ENCODE measurements at regions of chr4 and their contacts with region 1.

Region 1: DNA sequence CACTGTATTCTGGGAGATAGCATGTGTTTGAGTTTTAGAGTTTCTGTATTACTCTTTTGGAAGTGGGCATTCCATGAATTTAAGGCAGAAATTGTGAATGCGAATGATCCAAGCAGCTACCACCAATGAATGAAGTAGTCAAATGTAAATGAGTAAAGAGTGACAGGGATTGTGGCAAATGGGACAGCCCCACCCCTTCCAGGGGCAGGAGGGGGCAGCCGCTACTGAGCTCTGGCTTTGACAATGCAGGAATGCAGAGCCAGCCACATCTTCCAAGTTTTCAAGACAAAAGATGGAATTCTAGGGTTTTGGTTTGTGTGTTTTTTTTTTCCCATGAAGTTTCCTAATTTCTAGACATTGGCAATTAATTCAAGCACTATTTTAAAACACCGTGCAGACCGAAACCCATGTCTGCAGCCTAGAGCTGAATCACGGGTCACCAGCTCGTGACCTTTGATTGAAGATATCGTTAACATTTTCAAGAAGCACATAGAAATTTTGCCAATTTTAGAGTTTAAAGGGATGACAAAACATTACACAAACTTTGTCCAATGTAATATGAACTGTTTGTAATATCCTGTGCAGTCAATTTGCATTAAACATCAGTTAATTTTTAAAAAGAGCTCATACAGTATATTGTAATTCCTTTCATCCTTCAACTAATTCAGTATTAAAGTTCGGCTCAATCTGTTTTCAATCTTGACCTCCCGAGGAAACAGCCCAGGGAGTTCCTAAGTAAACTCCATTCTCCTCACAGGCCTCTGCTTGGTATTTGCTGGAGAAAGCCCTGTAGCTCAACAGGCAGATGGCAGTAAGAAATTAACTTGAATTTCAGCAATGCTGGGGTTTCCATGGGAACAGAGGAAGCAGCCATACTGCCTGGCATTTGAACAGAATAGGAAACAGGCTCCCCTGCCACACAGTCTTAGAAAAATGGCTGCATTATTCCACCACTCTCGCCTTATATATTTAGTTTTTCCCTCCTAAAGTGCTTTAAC is 83.4 kb downstream of the UCHL1 start:
- DNase-seq: peak in 6 of 10 donors; percentile 41 to 63 (median 52)
- H3K4me3 ChIP-seq: peak overlapping the region in 4 of 59 donors; percentile 4 to 29 (median 20)
- H3K27ac ChIP-seq: peak overlapping the region in 21 of 59 donors; percentile 1 to 68 (median 37)
- H3K27me3 ChIP-seq: no peaks in the 10 kb centered on the region
- CTCF ChIP-seq: peak; percentile 18 to 91 (median 73)

Region 2: DNA sequence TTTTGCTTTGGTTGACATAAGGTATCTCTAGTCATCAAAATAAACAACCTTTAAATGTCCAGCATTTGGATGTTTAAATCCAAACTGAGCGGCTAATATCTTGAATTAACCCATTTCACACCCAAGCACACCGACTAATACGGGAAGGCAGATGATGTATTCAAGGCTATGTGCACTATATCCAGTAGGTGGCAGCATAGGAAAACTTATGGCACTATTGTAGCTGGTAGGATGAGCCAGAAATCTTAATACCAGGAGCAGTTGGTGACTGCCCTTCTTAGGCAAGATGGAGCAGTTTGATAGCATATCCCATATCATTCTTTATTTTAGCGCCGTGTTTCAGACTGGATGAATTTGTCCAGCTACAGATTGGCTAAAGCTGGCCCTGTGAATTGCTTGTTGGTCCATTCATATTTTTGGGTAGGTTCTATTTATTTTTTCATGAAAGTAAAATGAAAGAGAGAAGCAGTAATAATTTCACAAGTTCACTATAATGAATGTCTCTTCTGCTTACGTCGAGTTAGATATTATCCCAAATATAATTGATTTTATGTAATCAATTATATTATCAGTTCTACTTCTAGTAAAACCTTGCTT is 59.0 kb before region 1 on chr4:
- intact Hi-C with region 1: loop called (anchors 5 to 10 kb)
- DNase-seq: peak in 2 of 10 donors; percentile 47 to 54
- H3K4me3 ChIP-seq: peak overlapping the region in 1 of 59 donors; percentile 20
- H3K27ac ChIP-seq: no peak overlapping the region
- H3K27me3 ChIP-seq: no peaks in the 10 kb centered on the region
- CTCF ChIP-seq: peak; percentile 81 to 99 (median 93)

Region 3: DNA sequence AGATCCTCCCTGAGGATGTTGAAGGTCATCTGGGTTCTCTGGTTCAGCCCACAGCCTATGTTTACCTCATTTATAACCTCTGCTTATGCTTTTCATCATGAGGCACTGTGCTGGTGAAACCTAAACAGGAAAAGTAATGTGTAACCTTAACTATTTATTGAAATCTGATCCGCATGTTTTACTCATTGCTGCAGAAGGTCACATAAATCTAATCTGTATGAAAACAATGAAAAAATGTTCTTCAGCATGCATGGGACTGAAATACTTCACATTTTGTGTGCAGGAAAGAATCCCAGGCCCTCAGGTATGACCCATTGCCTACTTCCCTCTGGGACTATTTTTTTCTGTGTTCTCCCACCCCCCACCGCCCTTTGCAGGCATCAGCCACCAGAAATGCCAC is 53.1 kb before region 1 on chr4:
- intact Hi-C with region 1: loop called (anchors 5 to 10 kb)
- DNase-seq: no peak
- H3K4me3 ChIP-seq: no peak overlapping the region
- H3K27ac ChIP-seq: no peak overlapping the region
- H3K27me3 ChIP-seq: peaks cover 0 to 3% (median 0%) of the 10 kb centered on the region in 45 donors
- CTCF ChIP-seq: no peak

Region 4: GRCh38 chr4:41644288-41644914 is 304.3 kb after region 1 on chr4:
- intact Hi-C with region 1: loop called (anchors 5 kb)
- DNase-seq: peak; percentile 69 to 88 (median 81)
- H3K4me3 ChIP-seq: peak overlapping the region in 57 of 59 donors; percentile 0 to 59 (median 33)
- H3K27ac ChIP-seq: peak overlapping the region in 55 of 59 donors; percentile 9 to 87 (median 69)
- H3K27me3 ChIP-seq: no peaks in the 10 kb centered on the region
- CTCF ChIP-seq: peak; percentile 70 to 99 (median 96)

Region 5: GRCh38 chr4:41661442-41662076 is 321.4 kb after region 1 on chr4:
- intact Hi-C with region 1: loop called (anchors 5 kb)
- DNase-seq: peak; percentile 54 to 85 (median 65)
- H3K4me3 ChIP-seq: no peak overlapping the region
- H3K27ac ChIP-seq: peak overlapping the region in 15 of 59 donors; percentile 5 to 62 (median 26)
- H3K27me3 ChIP-seq: no peaks in the 10 kb centered on the region
- CTCF ChIP-seq: peak; percentile 87 to 99 (median 95)

Measured in dorsolateral prefrontal cortex (tissue), 120 donors.